Psoas muscle (tissue), 8 donors: ENCODE measurements at regions of chr15 and their contacts with region 1.

Region 1: GRCh38 chr15:50278496-50278895 is 13.0 kb upstream of the HDC start:
- DNase-seq: no peak
- ATAC-seq: no peak
- H3K4me3 ChIP-seq: no peak overlapping the region
- H3K27ac ChIP-seq: no peak overlapping the region
- H3K4me1 ChIP-seq: no peaks in the 10 kb centered on the region
- H3K27me3 ChIP-seq: no peaks in the 10 kb centered on the region
- CTCF ChIP-seq: no peak

Region 2: DNA sequence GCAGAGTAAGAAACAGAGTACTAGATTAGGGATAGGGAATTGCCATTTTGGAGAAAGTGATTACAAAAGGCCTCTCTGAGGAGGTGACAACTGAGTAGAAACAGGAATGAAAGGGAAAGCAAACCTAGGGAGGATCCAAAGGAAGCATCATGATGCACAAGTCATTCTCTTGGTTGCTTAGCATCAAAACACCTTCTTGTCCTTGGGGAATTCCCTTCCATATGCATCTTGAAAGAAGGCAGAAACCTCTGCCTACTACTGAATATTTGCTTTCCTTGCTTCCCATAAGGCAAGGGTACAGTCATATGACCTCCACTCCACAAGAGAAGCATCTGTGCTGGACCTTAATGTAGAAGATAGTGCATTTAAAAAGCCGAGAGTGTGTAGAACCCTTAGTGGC is 52.4 kb after region 1 on chr15:
- intact Hi-C with region 1: loop called in 1 of 2 experiments (anchors 10 kb)
- DNase-seq: no peak
- ATAC-seq: no peak
- H3K4me3 ChIP-seq: no peak overlapping the region
- H3K27ac ChIP-seq: no peak overlapping the region
- H3K4me1 ChIP-seq: no peaks in the 10 kb centered on the region
- H3K27me3 ChIP-seq: no peaks in the 10 kb centered on the region
- CTCF ChIP-seq: no peak

Region 3: GRCh38 chr15:50463423-50464358 is 185.2 kb after region 1 on chr15:
- intact Hi-C with region 1: no loop called
- DNase-seq: no peak
- ATAC-seq: no peak
- H3K4me3 ChIP-seq: no peak overlapping the region
- H3K27ac ChIP-seq: no peak overlapping the region
- H3K4me1 ChIP-seq: no peaks in the 10 kb centered on the region
- H3K27me3 ChIP-seq: no peaks in the 10 kb centered on the region
- CTCF ChIP-seq: no peak